MCF 10A (cell line): ENCODE measurements at regions of chr3 and their contacts with region 1.

Region 1: DNA sequence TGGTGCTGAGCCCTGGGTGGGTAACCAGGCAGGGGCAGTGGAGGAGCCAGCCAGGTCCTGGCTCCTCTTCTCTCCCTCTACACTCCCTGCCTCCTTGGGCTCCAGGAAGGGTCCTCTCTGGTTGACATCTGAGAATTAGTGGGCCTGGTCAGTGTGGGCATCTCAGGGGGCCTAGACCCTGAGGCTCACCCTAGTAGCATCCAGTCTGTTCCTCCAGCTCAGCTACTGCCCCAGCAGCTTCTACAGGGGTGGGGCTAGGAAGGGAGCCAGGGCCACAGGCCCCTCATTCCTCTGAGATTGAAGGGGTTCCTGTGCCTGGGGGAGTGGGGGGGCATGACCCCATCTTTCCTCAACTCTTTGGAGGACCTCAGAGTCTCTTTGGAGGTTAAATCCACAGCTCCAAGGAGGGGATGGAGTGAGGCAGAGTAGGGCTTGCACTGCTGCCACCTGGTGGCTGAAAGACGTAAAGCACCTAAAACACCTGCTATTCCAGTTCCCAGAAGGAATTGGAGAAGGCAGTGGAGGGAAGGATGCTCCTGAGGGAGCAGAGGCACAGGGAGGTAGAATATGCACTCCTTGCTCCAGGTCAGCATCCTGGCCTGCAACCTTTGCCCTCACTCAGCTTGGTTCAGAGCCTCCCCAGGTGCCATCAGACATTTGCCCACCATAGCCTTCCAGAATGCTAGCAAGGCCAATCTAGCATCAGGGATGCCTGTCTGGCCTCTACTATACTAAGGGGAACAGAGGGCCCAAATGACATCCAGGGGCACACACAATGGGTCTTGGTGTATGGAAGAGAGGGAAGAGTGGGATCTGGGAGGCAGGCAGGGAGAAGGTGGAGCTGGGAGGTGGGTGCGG is 25.1 kb downstream of the C3orf18 start:
- DNase-seq: peak; percentile 69
- H3K4me3 Mint-ChIP-seq: no peak overlapping the region
- H3K27ac Mint-ChIP-seq: no peak overlapping the region
- H3K4me1 Mint-ChIP-seq: no peaks in the 10 kb centered on the region
- H3K27me3 Mint-ChIP-seq: peaks cover 18% of the 10 kb centered on the region
- CTCF ChIP-seq: peak; percentile 73

Region 2: DNA sequence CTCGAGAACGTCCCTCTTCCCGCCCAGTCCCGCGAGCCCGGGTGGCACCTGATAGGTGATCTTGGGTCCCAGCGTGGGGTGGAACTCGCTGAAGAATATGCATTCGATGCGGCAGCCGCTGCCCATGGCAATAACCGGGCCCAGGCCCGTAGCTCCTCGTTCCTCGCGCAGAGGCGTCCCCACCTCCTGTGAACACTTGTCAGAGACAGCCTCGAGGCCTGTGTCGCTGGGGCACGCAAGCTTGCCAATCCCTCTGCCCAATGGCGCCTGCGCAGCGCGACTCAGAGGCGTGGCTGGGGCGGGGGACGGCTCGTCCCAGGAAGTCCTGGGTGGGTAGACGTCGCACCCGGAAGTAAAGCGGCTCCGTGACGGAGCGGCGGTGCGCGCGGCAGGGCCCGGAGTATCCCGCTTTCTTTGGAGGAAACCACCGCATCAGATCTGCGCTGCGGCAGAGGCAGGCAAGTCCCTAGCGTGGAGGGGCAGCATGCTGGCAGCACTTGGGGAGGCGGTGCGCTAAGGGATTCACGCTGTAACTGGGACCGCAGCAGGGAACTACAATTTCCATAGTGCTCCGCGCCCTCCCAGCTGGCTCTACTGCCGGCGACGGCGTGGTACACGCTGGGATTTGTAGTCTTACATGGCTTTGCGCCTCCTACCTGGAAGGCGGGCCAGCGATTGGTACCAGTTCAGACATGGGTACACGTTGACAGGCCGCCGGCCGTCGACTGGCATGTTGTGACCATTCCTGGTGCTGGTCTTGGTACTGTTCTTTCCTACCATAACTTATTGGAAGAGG is 191.7 kb before region 1 on chr3 and contains the starts of genes CYB561D2 and NPRL2:
- CTCF ChIA-PET with region 1: interaction called, 36 read pairs
- POLR2A ChIA-PET with region 1: interaction called, 5 read pairs
- intact Hi-C with region 1: loop called (anchors 1 kb)
- DNase-seq: peak; percentile 95
- H3K4me3 Mint-ChIP-seq: peak within 1 kb of the TSS; percentile 87
- H3K27ac Mint-ChIP-seq: peak within 1 kb of the TSS; percentile 95
- H3K4me1 Mint-ChIP-seq: peaks cover 26% of the 10 kb centered on the region
- H3K27me3 Mint-ChIP-seq: no peaks in the 10 kb centered on the region
- CTCF ChIP-seq: no peak
- total RNA-seq, gene CYB561D2: 24.0 and 24.1 TPM in 2 replicates
- total RNA-seq, gene NPRL2: 21.1 and 22.1 TPM in 2 replicates

Region 3: GRCh38 chr3:50370594-50370993 is 171.8 kb before region 1 on chr3:
- CTCF ChIA-PET with region 1: interaction called, 11 read pairs
- POLR2A ChIA-PET with region 1: no interaction called
- intact Hi-C with region 1: loop called (anchors 1 kb)
- DNase-seq: peak; percentile 50
- H3K4me3 Mint-ChIP-seq: no peak overlapping the region
- H3K27ac Mint-ChIP-seq: no peak overlapping the region
- H3K4me1 Mint-ChIP-seq: peaks cover 6% of the 10 kb centered on the region
- H3K27me3 Mint-ChIP-seq: peaks cover 33% of the 10 kb centered on the region
- CTCF ChIP-seq: no peak

Region 4: GRCh38 chr3:50436114-50436674 is 106.2 kb before region 1 on chr3:
- CTCF ChIA-PET with region 1: interaction called, 22 read pairs
- POLR2A ChIA-PET with region 1: no interaction called
- intact Hi-C with region 1: loop called (anchors 1 kb)
- DNase-seq: peak; percentile 54
- H3K4me3 Mint-ChIP-seq: no peak overlapping the region
- H3K27ac Mint-ChIP-seq: no peak overlapping the region
- H3K4me1 Mint-ChIP-seq: no peaks in the 10 kb centered on the region
- H3K27me3 Mint-ChIP-seq: peaks cover 14% of the 10 kb centered on the region
- CTCF ChIP-seq: peak; percentile 87

Region 5: DNA sequence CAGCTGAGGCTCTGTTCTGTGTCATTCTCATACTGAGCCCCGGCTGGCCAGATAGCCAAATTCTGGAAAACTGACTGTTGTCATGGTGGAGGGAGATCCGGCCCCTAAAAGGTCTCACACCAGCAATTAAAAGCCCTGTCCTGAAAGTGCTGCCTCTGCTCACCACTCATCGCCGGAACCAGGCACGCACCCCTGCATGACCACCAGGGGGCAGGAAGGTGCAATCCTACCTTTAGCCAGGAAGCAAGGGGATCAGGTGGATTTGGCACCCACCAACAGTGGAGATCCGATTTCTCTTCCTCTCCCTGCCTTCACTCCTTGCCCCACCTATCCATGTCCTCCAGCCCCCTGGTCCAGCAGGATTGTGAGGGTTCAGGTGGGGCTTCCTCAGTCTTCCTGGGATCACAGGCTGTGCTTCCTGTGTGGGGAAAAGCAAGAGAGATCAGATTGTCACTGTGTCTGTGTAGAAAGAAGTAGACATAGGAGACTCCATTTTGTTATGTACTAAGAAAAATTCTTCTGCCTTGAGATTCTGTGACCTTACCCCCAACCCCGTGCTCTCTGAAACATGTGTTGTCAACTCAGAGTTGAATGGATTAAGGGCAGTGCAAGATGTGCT is 22.8 kb before region 1 on chr3:
- CTCF ChIA-PET with region 1: interaction called, 32 read pairs
- POLR2A ChIA-PET with region 1: no interaction called
- intact Hi-C with region 1: loop called (anchors 2 kb)
- DNase-seq: peak; percentile 61
- H3K4me3 Mint-ChIP-seq: no peak overlapping the region
- H3K27ac Mint-ChIP-seq: no peak overlapping the region
- H3K4me1 Mint-ChIP-seq: no peaks in the 10 kb centered on the region
- H3K27me3 Mint-ChIP-seq: peaks cover 39% of the 10 kb centered on the region
- CTCF ChIP-seq: peak; percentile 86

Region 6: DNA sequence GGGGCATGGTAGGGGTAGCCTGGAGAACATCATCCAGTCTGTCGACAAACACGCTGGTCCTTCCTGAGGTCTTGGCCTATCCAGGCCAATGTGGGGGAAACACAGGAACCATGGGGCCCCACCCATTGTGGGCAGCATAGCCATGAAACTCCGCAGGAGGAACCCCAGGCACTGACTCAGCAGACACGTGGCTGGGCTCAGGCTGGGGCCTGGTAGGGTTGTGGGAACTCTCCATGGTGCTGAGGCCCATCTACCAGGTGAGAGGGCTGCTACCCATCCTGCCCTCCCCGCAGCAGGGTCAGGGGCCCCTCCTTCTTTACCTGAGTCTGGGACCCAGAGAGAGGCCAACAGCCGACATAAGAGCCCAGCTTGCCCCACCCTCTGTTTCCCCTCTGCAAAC is 16.4 kb before region 1 on chr3:
- CTCF ChIA-PET with region 1: interaction called, 32 read pairs
- POLR2A ChIA-PET with region 1: no interaction called
- intact Hi-C with region 1: no loop called
- DNase-seq: peak; percentile 71
- H3K4me3 Mint-ChIP-seq: no peak overlapping the region
- H3K27ac Mint-ChIP-seq: no peak overlapping the region
- H3K4me1 Mint-ChIP-seq: no peaks in the 10 kb centered on the region
- H3K27me3 Mint-ChIP-seq: peaks cover 21% of the 10 kb centered on the region
- CTCF ChIP-seq: no peak

Region 7: GRCh38 chr3:50559702-50560101 is 17.3 kb after region 1 on chr3:
- CTCF ChIA-PET with region 1: interaction called, 16 read pairs
- POLR2A ChIA-PET with region 1: no interaction called
- intact Hi-C with region 1: no loop called
- DNase-seq: no peak
- H3K4me3 Mint-ChIP-seq: no peak overlapping the region
- H3K27ac Mint-ChIP-seq: no peak overlapping the region
- H3K4me1 Mint-ChIP-seq: peaks cover 10% of the 10 kb centered on the region
- H3K27me3 Mint-ChIP-seq: peaks cover 11% of the 10 kb centered on the region
- CTCF ChIP-seq: no peak